Left ventricle myocardium superior (tissue), 1 donor: ENCODE measurements at regions of chr13 and their contacts with region 1.

Region 1: GRCh38 chr13:96011291-96011872 is 41.8 kb downstream of the UGGT2 start:
- DNase-seq: no peak
- ATAC-seq: no peak

Region 2: DNA sequence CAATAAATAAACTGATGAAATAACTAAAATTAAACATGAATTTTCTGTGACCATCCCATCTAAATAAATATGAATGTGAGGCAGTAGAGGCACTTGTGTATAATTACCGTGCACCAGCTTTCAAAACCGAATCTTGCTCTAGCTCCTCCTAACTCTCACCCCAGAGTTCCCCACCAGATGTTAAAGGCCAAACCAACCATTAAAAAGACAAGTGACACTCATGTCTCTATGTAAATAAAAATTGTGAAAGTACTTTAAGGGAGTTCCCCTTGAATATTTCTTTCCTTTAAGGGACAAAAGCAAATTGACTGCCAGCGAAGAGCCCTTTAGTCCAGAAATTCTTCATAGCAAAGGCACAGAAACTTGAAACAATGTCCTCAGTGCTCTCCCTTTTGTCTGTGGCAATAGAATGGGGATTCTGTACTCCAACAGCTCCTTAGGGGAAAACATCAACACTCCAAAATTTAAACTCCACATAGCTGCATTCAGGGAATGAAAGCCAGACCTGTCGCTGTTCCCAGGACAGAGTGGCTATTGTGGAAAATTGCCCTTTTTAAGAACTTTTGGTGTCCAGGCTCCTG is 1197.4 kb before region 1 on chr13:
- intact Hi-C with region 1: no loop called
- DNase-seq: no peak
- ATAC-seq: no peak

Region 3: DNA sequence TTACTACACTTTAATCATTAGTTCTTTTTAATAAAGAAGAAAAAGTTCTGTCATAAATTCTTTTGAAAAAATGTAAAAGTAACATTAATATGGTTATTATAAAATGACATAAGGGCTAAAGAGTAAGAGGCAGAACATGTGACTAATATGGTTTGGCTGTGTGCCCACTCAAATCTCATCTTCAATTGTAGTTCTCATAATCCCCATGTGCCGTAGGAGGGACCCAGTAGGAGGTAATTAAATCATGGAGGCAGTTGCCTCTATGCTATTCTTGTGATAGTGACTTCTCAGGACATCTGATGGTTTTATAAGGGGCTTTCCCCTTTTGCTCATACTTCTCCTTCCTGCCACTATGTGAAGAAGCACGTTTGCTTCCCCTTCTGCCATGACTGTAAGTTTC is 62.7 kb before region 1 on chr13:
- intact Hi-C with region 1: no loop called
- DNase-seq: no peak
- ATAC-seq: no peak

Region 4: GRCh38 chr13:96053011-96053703 is 41.8 kb after region 1 on chr13 and contains the start of gene UGGT2:
- intact Hi-C with region 1: no loop called
- DNase-seq: peak; percentile 98
- ATAC-seq: peak; percentile 100
- total RNA-seq, gene UGGT2: 12.9 TPM

Region 5: GRCh38 chr13:96958286-96958891 is 947.0 kb after region 1 on chr13:
- intact Hi-C with region 1: loop called (anchors 10 kb)
- DNase-seq: no peak
- ATAC-seq: no peak